ENCODE measurements at regions of chr14 and their contacts with region 1.

Region 1: GRCh38 chr14:52824507-52824906 is 33.1 kb upstream of the GNPNAT1 start:
- DNase-seq: no peak

Region 2: GRCh38 chr14:52885230-52885629 is 60.7 kb after region 1 on chr14:
- intact Hi-C with region 1: no loop called
- DNase-seq: no peak

Region 3: GRCh38 chr14:52961060-52961639 is 136.6 kb after region 1 on chr14:
- intact Hi-C with region 1: loop called (anchors 5 kb)
- DNase-seq: peak in 30 of 42 donors; percentile 13 to 75 (median 36)

Region 4: GRCh38 chr14:53055003-53055402 is 230.5 kb after region 1 on chr14:
- intact Hi-C with region 1: loop called (anchors 10 kb)
- DNase-seq: peak in 1 of 42 donors; percentile 36

Region 5: GRCh38 chr14:53306267-53306721 is 481.8 kb after region 1 on chr14:
- intact Hi-C with region 1: loop called (anchors 5 kb)
- DNase-seq: peak; percentile 59 to 90 (median 75)